Activated CD4-positive, alpha-beta memory T cell treated with anti-CD3 and anti-CD28 coated beads for 36 hours (primary cell): ENCODE measurements at regions of chr12 and their contacts with region 1.

Region 1: GRCh38 chr12:3658327-3659163 is 94.4 kb downstream of the CRACR2A start:
- DNase-seq: peak; percentile 40
- H3K4me3 Mint-ChIP-seq: no peak overlapping the region
- H3K27ac Mint-ChIP-seq: no peak overlapping the region
- H3K4me1 Mint-ChIP-seq: no peaks in the 10 kb centered on the region
- H3K27me3 Mint-ChIP-seq: no peaks in the 10 kb centered on the region

Region 2: DNA sequence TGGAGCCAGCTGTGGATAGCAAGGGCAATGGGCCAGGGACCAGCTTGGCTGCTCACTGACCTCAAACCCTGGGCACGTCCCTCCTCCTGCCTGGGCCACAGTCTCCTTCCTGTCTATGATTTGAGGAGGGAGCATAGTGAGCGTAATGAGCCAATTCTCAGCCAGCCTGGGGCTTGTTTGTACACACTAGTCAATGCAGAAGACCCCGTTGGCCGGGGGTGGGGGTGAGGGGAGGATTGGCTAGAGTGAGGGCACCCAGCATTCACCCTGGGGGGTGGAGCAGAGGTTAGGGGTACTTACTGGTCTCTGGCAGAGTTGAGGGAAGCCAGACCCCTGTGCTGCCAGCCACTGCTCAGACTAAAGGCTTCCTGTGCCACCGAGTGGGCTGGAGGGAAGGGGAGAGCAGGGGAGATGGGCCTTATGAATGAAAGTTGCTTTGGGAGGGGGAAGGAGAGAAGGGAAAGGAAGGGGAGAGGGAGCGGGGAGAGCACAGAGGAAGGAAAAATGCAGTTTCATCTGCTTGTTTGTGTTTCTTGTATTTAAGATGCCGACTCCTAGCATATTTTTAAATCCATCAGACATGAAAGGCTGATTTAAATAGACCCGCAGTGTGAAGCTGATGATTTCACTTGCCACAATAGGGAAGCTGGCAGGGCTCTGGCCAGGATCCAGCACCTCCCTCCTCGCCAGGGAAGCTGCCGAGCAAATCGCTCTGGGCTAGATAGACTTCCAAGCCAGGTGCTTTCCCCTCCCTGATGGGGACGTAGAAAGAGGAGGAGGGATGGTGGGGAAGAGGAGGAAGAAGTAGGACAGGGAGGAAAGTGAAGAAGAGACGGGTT is 53.6 kb before region 1 on chr12:
- CTCF ChIA-PET with region 1: no interaction called
- POLR2A ChIA-PET with region 1: no interaction called
- intact Hi-C with region 1: no loop called
- DNase-seq: no peak
- H3K4me3 Mint-ChIP-seq: no peak overlapping the region
- H3K27ac Mint-ChIP-seq: no peak overlapping the region
- H3K4me1 Mint-ChIP-seq: no peaks in the 10 kb centered on the region
- H3K27me3 Mint-ChIP-seq: no peaks in the 10 kb centered on the region

Region 3: DNA sequence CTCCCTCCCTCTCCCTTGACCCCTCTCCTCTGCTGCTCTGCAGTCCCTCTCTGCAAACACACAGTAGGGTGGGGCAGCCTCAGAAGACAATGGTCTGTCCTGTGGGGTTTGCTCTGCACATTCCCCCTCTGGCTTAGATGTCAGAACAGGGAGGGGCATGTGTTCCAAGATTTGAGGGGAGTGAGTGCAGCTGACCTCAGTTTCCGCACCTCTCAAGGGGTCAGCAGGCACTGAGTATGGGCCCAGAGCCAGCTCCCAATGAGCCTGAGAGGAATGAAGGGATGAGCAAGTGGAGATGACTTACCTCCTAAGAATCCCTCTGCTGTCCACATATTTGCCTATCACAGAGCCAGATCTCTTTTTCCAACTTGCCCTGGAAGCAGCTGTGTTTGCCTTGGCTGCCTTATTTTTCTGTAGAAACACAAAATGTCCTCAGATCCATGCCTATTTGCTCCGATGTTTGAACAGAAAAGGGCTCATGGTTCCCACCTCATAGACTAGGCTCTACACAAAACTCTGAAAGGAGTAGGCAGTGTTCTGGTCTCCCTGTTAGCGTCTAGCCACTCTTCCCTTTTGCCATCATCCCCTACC is 17.0 kb before region 1 on chr12:
- CTCF ChIA-PET with region 1: no interaction called
- POLR2A ChIA-PET with region 1: no interaction called
- intact Hi-C with region 1: no loop called
- DNase-seq: no peak
- H3K4me3 Mint-ChIP-seq: no peak overlapping the region
- H3K27ac Mint-ChIP-seq: no peak overlapping the region
- H3K4me1 Mint-ChIP-seq: no peaks in the 10 kb centered on the region
- H3K27me3 Mint-ChIP-seq: no peaks in the 10 kb centered on the region

Region 4: DNA sequence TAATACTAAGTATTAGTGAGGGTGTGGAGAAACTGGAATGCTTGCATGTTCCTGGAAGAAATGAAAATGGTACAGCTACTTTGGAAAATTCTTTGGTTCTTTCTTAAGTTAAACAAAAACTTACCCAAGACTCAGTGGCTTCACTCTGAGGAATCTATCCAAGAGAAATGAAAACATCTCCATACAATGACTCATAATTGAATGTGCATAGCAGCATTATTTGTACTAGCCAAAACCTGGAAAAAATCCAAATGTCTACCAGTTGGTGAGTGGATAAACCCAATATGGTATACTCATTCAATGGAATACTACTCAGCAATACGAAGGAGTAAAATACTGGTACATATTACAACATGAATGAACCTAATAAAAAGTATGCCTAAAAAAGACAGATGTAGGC is 112.3 kb after region 1 on chr12:
- CTCF ChIA-PET with region 1: interaction called, 4 read pairs
- POLR2A ChIA-PET with region 1: no interaction called
- intact Hi-C with region 1: loop called (anchors 2 kb)
- DNase-seq: no peak
- H3K4me3 Mint-ChIP-seq: no peak overlapping the region
- H3K27ac Mint-ChIP-seq: no peak overlapping the region
- H3K4me1 Mint-ChIP-seq: peaks cover 10% of the 10 kb centered on the region
- H3K27me3 Mint-ChIP-seq: no peaks in the 10 kb centered on the region

Region 5: DNA sequence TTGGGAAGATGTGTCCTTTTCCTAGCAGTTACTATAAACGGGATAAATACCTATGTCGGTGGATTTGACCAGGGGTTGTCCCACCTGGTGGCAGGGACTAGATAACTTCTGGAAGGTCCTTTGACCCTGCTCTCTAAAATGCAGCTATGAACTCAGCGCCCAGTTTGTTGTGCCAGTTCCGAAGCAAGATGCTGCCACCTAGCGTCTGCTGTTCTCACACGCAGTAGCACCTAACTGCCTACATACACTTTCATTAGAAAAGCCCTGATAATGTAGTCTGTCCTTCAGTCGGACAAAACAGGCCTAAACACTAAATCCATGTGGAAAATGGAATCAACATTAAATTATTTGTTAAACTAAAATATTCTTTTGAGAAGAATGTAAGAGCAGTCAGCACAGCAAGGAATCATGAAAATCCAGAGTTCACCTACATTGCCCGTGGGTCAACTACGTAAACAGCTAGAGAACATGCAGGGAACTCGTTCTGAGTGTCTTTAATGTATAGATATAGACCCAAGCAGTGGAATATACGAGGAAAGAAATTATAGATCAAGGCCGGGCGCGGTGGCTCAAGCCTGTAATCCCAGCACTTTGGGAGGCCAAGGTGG is 145.4 kb after region 1 on chr12:
- CTCF ChIA-PET with region 1: interaction called, 10 read pairs
- POLR2A ChIA-PET with region 1: no interaction called
- intact Hi-C with region 1: loop called (anchors 1 kb)
- DNase-seq: peak; percentile 81
- H3K4me3 Mint-ChIP-seq: no peak overlapping the region
- H3K27ac Mint-ChIP-seq: no peak overlapping the region
- H3K4me1 Mint-ChIP-seq: peaks cover 9% of the 10 kb centered on the region
- H3K27me3 Mint-ChIP-seq: no peaks in the 10 kb centered on the region